ENCODE measurements at regions of chr9 and their contacts with region 1.

Region 1: DNA sequence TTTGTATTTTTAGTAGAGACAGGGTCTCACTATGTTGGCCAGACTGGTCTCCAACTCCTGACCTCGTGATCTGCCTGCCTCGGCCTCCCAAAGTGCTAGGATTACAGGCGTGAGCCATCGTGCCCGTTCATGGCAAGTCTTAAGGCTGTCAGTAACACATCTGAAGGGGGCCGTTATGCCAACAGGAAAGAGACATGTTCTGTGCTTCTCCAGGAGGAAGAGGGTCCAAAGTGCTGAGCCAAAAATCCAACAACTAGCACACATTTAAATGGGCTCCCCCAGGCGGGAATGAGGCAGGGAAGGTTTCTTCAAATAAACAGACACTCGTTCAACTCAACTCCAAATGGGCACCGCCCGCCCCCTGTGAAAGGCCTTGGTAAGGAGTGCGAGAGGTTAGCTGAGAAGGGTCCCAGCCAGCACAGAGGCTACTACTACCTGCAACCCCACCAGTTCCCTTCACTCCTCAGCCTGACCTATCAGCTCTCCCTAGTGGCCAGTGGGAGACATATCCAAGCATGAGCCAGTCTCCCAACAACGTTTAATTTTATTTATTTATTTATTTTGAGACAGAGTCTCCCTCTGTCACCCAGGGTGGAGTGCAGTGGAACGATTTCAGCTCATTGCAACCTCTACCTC is 84.1 kb upstream of the DMRT1 start:
- DNase-seq: peak in 1 of 35 experiments; percentile 19
- ATAC-seq: peak in 1 of 4 experiments; percentile 50
- H3K4me3 ChIP-seq: no peak overlapping the region
- H3K4me3 Mint-ChIP-seq: no peak overlapping the region
- H3K27ac ChIP-seq: no peak overlapping the region
- H3K27ac Mint-ChIP-seq: no peak overlapping the region
- H3K4me1 ChIP-seq: no peaks in the 10 kb centered on the region
- H3K4me1 Mint-ChIP-seq: peaks cover 0 to 7% (median 0%) of the 10 kb centered on the region in 3 donors
- H3K27me3 ChIP-seq: peaks cover 0 to 5% of the 10 kb centered on the region in 2 experiments
- H3K27me3 Mint-ChIP-seq: peaks cover 0 to 1% of the 10 kb centered on the region in 2 donors

Region 2: DNA sequence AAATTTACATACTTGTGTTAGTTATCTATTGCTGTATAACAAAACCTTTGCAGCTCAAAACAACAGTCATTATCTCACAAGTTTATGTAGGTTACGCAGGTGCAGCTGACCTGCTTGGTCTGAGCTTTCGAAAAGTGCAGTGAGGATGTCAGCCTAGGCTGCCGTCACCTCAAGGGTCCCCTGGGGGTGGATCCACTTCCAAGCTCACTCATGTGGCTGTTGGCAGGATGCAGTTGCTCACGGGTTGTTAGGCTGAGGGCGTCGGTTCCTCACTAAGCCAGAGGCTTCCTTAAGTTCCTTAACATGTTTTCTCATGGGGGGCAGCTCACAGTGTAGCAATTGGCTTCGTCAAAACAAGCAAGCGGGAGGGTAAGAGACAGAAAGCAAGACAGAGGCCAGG is 402.9 kb before region 1 on chr9:
- CTCF ChIA-PET with region 1: no interaction called
- POLR2A ChIA-PET with region 1: interaction called in 1 of 2 experiments, 11 read pairs
- DNase-seq: no peak
- ATAC-seq: peak in 1 of 4 experiments; percentile 17
- H3K4me3 ChIP-seq: no peak overlapping the region
- H3K4me3 Mint-ChIP-seq: no peak overlapping the region
- H3K27ac ChIP-seq: no peak overlapping the region
- H3K27ac Mint-ChIP-seq: peak overlapping the region; percentile 15 to 17
- H3K4me1 ChIP-seq: peaks cover 0 to 12% of the 10 kb centered on the region in 2 experiments
- H3K4me1 Mint-ChIP-seq: peaks cover 39 to 57% (median 50%) of the 10 kb centered on the region in 3 donors
- H3K27me3 ChIP-seq: no peaks in the 10 kb centered on the region
- H3K27me3 Mint-ChIP-seq: no peaks in the 10 kb centered on the region

Region 3: GRCh38 chr9:795869-796268 is 38.5 kb after region 1 on chr9:
- CTCF ChIA-PET with region 1: no interaction called
- POLR2A ChIA-PET with region 1: no interaction called
- DNase-seq: no peak
- ATAC-seq: no peak
- H3K4me3 ChIP-seq: no peak overlapping the region
- H3K4me3 Mint-ChIP-seq: no peak overlapping the region
- H3K27ac ChIP-seq: no peak overlapping the region
- H3K27ac Mint-ChIP-seq: no peak overlapping the region
- H3K4me1 ChIP-seq: no peaks in the 10 kb centered on the region
- H3K4me1 Mint-ChIP-seq: no peaks in the 10 kb centered on the region
- H3K27me3 ChIP-seq: peaks cover 0 to 4% of the 10 kb centered on the region in 2 experiments
- H3K27me3 Mint-ChIP-seq: peaks cover 6 to 8% of the 10 kb centered on the region in 2 donors

Region 4: GRCh38 chr9:806285-807156 is 49.2 kb after region 1 on chr9:
- CTCF ChIA-PET with region 1: no interaction called
- POLR2A ChIA-PET with region 1: no interaction called
- DNase-seq: peak in 2 of 35 experiments; percentile 3 to 47
- ATAC-seq: no peak
- H3K4me3 ChIP-seq: no peak overlapping the region
- H3K4me3 Mint-ChIP-seq: no peak overlapping the region
- H3K27ac ChIP-seq: no peak overlapping the region
- H3K27ac Mint-ChIP-seq: no peak overlapping the region
- H3K4me1 ChIP-seq: no peaks in the 10 kb centered on the region
- H3K4me1 Mint-ChIP-seq: peaks cover 0 to 2% (median 0%) of the 10 kb centered on the region in 3 donors
- H3K27me3 ChIP-seq: no peaks in the 10 kb centered on the region
- H3K27me3 Mint-ChIP-seq: peaks cover 7% of the 10 kb centered on the region in 2 donors

Measured in T-cell (primary cell).